PC-9 (cell line): ENCODE measurements at regions of chr2 and their contacts with region 1.

Region 1: GRCh38 chr2:40401896-40402295 is 50.0 kb downstream of the SLC8A1 start:
- DNase-seq: peak; percentile 73 to 91
- H3K4me3 ChIP-seq: peak overlapping the region; percentile 18; the same call in 1 of the 2 replicates
- H3K27ac ChIP-seq: peak overlapping the region; percentile 68
- H3K4me1 ChIP-seq: peaks cover 37% of the 10 kb centered on the region
- H3K27me3 ChIP-seq: no peaks in the 10 kb centered on the region
- CTCF ChIP-seq: no peak

Region 2: DNA sequence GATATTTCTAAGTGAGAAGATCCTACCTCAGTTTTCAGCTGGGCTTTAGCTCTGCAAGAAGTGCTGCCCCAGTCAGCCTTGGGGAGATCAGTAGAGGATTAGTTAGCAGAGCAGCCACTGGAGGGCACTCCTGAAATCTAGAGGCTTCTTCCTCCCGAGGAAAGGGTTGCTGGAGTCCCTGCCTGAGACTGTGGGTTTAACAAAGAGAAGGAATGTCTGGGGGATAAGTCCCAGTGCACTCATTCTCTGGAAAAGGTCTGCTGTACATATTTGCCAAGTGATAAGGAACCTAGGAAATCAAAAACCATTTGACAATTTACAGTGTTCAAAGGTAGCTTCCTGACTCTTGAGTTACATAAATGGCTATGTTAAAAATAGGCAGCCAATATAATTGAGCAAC is 157.2 kb before region 1 on chr2:
- CTCF ChIA-PET with region 1: no interaction called
- POLR2A ChIA-PET with region 1: no interaction called
- intact Hi-C with region 1: loop called (anchors 2 kb)
- DNase-seq: peak; percentile 43 to 55
- H3K4me3 ChIP-seq: no peak overlapping the region
- H3K27ac ChIP-seq: no peak overlapping the region
- H3K4me1 ChIP-seq: no peaks in the 10 kb centered on the region
- H3K27me3 ChIP-seq: no peaks in the 10 kb centered on the region
- CTCF ChIP-seq: peak; percentile 78

Region 3: GRCh38 chr2:40281021-40281940 is 120.6 kb before region 1 on chr2:
- CTCF ChIA-PET with region 1: no interaction called
- POLR2A ChIA-PET with region 1: interaction called, 4 read pairs
- intact Hi-C with region 1: loop called (anchors 5 kb)
- DNase-seq: peak in 1 of 2 experiments; percentile 24
- H3K4me3 ChIP-seq: no peak overlapping the region
- H3K27ac ChIP-seq: no peak overlapping the region
- H3K4me1 ChIP-seq: no peaks in the 10 kb centered on the region
- H3K27me3 ChIP-seq: no peaks in the 10 kb centered on the region
- CTCF ChIP-seq: no peak

Region 4: DNA sequence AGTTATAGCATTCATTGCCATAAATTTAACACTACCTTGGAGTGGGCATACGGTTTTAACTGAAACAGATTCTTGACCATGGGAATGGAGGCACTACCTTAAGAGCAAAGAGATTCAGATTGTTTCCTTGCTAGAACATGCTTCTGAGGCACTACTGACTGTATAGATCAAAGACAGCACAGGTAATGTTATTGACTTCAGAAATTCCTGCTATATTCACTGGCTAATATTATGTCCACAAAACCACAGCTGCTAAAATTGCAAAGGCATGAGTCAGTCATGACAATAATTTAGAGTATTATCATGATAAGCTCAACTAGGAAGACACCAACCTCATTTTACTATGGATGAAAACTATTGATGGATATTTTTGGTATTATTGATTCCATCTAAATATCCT is 10.6 kb after region 1 on chr2:
- CTCF ChIA-PET with region 1: no interaction called
- POLR2A ChIA-PET with region 1: interaction called, 7 read pairs
- intact Hi-C with region 1: loop called (anchors 1 kb)
- DNase-seq: peak in 1 of 2 experiments; percentile 86
- H3K4me3 ChIP-seq: no peak overlapping the region
- H3K27ac ChIP-seq: no peak overlapping the region
- H3K4me1 ChIP-seq: peaks cover 22% of the 10 kb centered on the region
- H3K27me3 ChIP-seq: no peaks in the 10 kb centered on the region
- CTCF ChIP-seq: no peak